A549 (cell line): ENCODE measurements at regions of chr2 and their contacts with region 1.

Region 1: GRCh38 chr2:10157293-10157692 is 34.8 kb downstream of the RRM2 start:
- DNase-seq: peak; percentile 41 to 44
- ATAC-seq: peak in 1 of 2 experiments; percentile 53; a peak in 3 of 6 replicates
- H3K4me3 ChIP-seq: no peak overlapping the region
- H3K27ac ChIP-seq: no peak overlapping the region
- H3K4me1 ChIP-seq: no peaks in the 10 kb centered on the region
- CTCF ChIP-seq: no peak
- EP300 ChIP-seq: no peak
- POLR2A ChIP-seq: no peak
- RAD21 ChIP-seq: peak in 1 of 2 experiments; percentile 7; a peak in 1 of 5 replicates

Region 2: GRCh38 chr2:10170256-10170655 is 13.0 kb after region 1 on chr2:
- CTCF ChIA-PET with region 1: interaction called, 16 read pairs
- POLR2A ChIA-PET with region 1: no interaction called
- DNase-seq: no peak
- ATAC-seq: no peak
- H3K4me3 ChIP-seq: no peak overlapping the region
- H3K27ac ChIP-seq: no peak overlapping the region
- H3K4me1 ChIP-seq: peaks cover 11% of the 10 kb centered on the region
- CTCF ChIP-seq: no peak
- EP300 ChIP-seq: no peak
- POLR2A ChIP-seq: no peak
- RAD21 ChIP-seq: no peak

Region 3: DNA sequence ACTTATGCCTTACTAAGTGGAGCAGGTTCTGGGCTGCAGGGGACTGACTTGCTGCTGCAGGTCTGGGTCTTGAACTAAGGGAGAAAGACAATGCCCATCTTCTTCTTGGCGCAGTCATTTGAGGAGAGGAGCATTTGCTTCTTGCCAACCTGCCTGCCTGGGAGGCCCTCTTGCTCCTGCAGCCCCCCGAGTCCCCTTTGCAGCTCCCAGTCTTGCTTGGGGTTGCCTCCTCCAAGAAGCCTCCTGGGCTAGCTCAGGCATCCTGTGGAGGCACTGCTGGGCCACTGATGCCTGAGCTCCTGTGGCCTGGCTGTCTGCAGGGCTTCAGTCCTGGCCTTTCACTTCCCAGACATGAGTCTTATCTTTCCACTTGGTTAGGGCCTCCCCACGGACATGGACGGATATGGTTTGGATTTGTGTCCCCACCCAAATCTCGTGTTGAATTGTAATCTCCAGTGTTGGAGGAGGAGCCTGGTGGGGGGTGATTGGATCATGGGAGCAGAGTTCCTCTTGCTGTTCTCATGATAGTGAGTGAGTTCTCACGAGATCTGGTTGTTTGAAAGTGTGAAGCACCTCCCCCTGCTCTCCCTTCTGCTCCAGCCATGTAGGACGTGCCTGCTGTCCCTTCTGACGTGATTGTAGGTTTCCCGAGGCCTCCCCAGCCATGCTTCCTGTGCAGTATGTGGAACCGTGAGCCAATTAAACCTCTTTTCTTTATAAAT is 162.7 kb after region 1 on chr2:
- CTCF ChIA-PET with region 1: no interaction called
- POLR2A ChIA-PET with region 1: no interaction called
- DNase-seq: no peak
- ATAC-seq: no peak
- H3K4me3 ChIP-seq: no peak overlapping the region
- H3K27ac ChIP-seq: no peak overlapping the region
- H3K4me1 ChIP-seq: peaks cover 19% of the 10 kb centered on the region
- CTCF ChIP-seq: no peak
- EP300 ChIP-seq: no peak
- POLR2A ChIP-seq: no peak
- RAD21 ChIP-seq: no peak